GM10248 (cell line): ENCODE measurements at regions of chr6 and their contacts with region 1.

Region 1: GRCh38 chr6:1596088-1596852 is 13.4 kb upstream of the FOXC1 start:
- DNase-seq: peak; percentile 83
- CTCF ChIP-seq: peak; percentile 91

Region 2: GRCh38 chr6:2196079-2196679 is 599.9 kb after region 1 on chr6:
- CTCF ChIA-PET with region 1: interaction called, 17 read pairs
- POLR2A ChIA-PET with region 1: no interaction called
- DNase-seq: peak; percentile 38
- CTCF ChIP-seq: peak; percentile 78

Region 3: GRCh38 chr6:2346078-2346477 is 749.8 kb after region 1 on chr6:
- CTCF ChIA-PET with region 1: interaction called, 14 read pairs
- POLR2A ChIA-PET with region 1: no interaction called
- DNase-seq: no peak
- CTCF ChIP-seq: no peak

Region 4: DNA sequence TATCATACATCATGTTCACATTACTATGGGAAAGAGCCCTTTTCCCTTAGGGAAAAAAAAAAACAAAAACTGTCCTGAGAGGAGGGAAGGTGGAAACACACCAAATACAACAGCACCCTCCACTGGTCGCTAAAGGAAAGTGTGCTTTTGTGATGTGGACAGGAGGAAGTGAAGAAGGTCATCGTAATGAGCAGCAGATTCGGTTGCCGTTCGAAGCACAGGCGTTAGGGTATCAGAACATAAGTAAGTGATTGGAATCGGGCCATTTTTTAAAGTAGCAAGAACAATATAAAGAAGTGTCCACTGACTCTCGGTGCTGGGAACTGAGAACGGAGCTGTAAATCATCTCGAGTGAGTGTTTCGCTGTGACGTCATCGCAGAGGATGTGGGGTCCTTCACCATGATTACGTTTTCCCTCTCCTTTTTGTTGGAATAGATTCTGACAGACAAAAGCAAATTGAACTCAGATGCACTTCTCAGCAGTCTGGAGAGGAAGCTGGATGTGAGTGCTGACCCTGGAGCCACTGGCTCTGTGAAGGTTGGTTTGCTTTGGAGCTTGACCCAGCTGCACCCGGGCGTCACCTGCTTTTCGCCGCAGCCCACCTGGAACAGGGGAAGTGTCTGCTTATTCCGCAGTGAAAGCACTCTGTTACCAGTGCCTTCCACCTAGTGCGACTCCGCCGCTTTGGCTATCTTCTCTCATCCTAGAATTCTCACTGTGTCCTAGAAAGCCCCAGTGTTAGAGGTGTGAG is 852.7 kb after region 1 on chr6:
- CTCF ChIA-PET with region 1: interaction called, 16 read pairs
- POLR2A ChIA-PET with region 1: no interaction called
- DNase-seq: peak; percentile 70
- CTCF ChIP-seq: peak; percentile 61

Region 5: GRCh38 chr6:2749969-2750600 is 1153.8 kb after region 1 on chr6:
- CTCF ChIA-PET with region 1: interaction called, 30 read pairs
- POLR2A ChIA-PET with region 1: no interaction called
- DNase-seq: peak; percentile 51
- CTCF ChIP-seq: peak; percentile 61